Tibial artery (tissue), 4 donors: ENCODE measurements at regions of chr3 and their contacts with region 1.

Region 1: DNA sequence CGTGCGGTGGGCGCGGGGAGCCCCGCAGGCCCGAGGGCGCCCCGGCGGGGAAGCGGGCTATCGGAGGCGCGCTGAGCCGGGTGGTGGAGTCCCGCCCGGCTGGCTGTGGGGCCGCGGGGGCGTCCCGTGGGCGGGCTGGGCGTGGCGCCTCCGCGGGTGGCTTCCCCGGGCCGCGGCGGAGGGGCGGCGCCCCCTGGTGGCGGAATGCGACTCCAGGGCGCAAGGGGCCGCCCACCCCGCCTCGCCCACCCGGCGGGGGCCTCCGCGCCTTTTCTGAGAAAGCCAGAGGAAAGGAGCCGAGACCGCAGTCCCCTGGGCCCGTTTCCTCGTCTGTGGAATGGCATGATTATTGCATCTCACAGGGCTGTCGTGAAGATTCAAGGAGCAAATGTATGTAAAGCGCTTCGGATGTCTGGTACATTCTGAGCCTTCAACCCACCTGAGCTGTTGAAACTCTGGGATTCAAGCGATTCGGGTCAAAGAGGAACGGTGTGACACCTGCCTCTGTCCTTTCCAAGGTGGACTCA is 31.9 kb upstream of the RAB6B start:
- DNase-seq: peak in 1 of 2 donors; percentile 69
- H3K4me3 ChIP-seq: peak overlapping the region; percentile 52 to 66
- H3K27ac ChIP-seq: no peak overlapping the region
- H3K4me1 ChIP-seq: peaks cover 0 to 16% (median 10%) of the 10 kb centered on the region in 4 donors
- H3K27me3 ChIP-seq: peaks cover 0 to 3% of the 10 kb centered on the region in 2 donors
- CTCF ChIP-seq: peak; percentile 70 to 83

Region 2: GRCh38 chr3:133475245-133476010 is 452.2 kb before region 1 on chr3:
- intact Hi-C with region 1: no loop called
- DNase-seq: no peak
- H3K4me3 ChIP-seq: no peak overlapping the region
- H3K27ac ChIP-seq: no peak overlapping the region
- H3K4me1 ChIP-seq: peaks cover 0 to 11% (median 7%) of the 10 kb centered on the region in 4 donors
- H3K27me3 ChIP-seq: no peaks in the 10 kb centered on the region
- CTCF ChIP-seq: no peak

Region 3: DNA sequence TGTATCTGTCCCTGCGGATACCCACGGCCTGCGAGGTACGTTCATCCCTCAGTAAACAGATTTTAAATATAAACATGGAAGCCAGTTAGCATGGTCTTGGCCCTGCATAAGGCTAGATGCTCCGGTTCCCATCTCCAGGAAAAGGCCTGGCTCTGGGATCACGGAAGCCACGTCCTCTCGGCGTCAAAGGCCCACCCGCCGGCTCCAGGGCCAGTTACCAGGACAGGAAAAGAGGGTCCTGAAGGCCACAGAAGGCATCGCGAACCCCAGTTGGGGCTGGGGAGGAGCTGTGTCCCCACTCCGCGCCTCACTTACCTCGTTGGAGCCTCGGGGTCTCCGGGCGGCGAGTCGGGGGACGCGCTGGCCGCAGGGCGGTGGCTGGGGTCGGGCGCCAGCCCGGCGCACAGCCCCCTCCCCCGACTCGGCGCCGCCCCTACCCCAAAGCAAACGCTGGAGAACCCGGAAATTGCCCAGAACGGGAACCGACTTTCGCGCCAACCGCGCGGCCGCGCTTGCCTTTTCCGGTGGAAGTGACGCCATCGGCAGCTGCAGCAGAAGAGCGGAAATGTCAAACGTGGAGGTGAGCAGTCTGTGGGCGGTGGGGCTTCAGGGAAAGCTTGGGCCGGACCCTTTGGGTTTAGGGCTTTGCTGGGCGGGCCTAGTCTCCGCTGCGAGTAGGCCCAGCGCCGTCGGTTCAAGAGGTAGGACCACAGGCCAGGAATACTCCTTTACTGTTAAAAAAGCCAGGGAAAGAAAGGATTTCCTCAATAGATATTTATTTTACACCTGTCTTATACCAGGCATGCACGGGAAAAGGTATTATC is 265.9 kb before region 1 on chr3 and contains the start of gene TOPBP1:
- intact Hi-C with region 1: loop called (anchors 10 kb)
- DNase-seq: peak; percentile 69 to 81
- H3K4me3 ChIP-seq: peak within 1 kb of the TSS; percentile 86 to 98
- H3K27ac ChIP-seq: peak within 1 kb of the TSS; percentile 86 to 87
- H3K4me1 ChIP-seq: peaks cover 0 to 23% (median 4%) of the 10 kb centered on the region in 4 donors
- H3K27me3 ChIP-seq: no peaks in the 10 kb centered on the region
- CTCF ChIP-seq: no peak

Region 4: GRCh38 chr3:133821767-133822638 is 105.6 kb before region 1 on chr3:
- intact Hi-C with region 1: loop called (anchors 5 kb)
- DNase-seq: peak; percentile 54 to 71
- H3K4me3 ChIP-seq: no peak overlapping the region
- H3K27ac ChIP-seq: no peak overlapping the region
- H3K4me1 ChIP-seq: peaks cover 0 to 6% (median 3%) of the 10 kb centered on the region in 4 donors
- H3K27me3 ChIP-seq: no peaks in the 10 kb centered on the region
- CTCF ChIP-seq: no peak